ENCODE measurements at regions of chr4 and their contacts with region 1.

Region 1: DNA sequence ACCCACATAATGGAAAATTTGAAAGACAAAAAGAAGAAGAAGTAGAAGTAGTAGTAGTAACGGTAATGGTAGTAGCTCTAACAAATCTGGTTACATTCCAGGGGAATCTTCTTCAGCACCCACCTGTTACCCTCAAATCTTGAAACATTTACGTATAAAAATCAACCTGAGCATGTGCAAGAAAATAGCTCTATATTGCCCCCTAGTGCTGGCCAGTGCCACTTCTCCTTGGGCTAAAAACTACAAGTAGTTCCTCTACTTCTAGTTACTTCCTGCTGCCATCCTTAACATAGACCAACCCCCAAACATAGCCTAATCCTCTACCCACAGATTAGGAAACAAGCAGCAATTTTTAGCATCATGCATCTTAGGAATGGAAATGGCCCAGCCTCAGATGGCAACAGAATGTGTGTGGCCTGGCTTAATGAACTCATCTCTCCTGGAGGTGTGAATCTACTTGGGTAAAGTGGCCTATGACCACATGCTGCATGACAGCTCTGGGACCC is 3.1 kb downstream of the PDGFC start:
- DNase-seq: peak; percentile 33 to 61
- ATAC-seq: peak; percentile 28 to 66 (median 57)
- H3K4me3 ChIP-seq: peak overlapping the region; percentile 84
- H3K27ac ChIP-seq: peak overlapping the region; percentile 89
- H3K4me1 ChIP-seq: peaks cover 20% of the 10 kb centered on the region
- H3K27me3 ChIP-seq: no peaks in the 10 kb centered on the region
- CTCF ChIP-seq: peak; percentile 84

Region 2: GRCh38 chr4:156475322-156475721 is 493.2 kb before region 1 on chr4:
- intact Hi-C with region 1: loop called in 1 of 2 experiments (anchors 10 kb)
- DNase-seq: no peak
- ATAC-seq: peak; percentile 66 to 88 (median 74)
- H3K4me3 ChIP-seq: no peak overlapping the region
- H3K27ac ChIP-seq: no peak overlapping the region
- H3K4me1 ChIP-seq: no peaks in the 10 kb centered on the region
- H3K27me3 ChIP-seq: no peaks in the 10 kb centered on the region
- CTCF ChIP-seq: peak; percentile 62

Region 3: GRCh38 chr4:156594624-156595023 is 373.9 kb before region 1 on chr4:
- intact Hi-C with region 1: loop called in 1 of 2 experiments (anchors 5 kb)
- DNase-seq: peak; percentile 34 to 47
- ATAC-seq: no peak
- H3K4me3 ChIP-seq: no peak overlapping the region
- H3K27ac ChIP-seq: no peak overlapping the region
- H3K4me1 ChIP-seq: peaks cover 3% of the 10 kb centered on the region
- H3K27me3 ChIP-seq: no peaks in the 10 kb centered on the region
- CTCF ChIP-seq: no peak

Region 4: DNA sequence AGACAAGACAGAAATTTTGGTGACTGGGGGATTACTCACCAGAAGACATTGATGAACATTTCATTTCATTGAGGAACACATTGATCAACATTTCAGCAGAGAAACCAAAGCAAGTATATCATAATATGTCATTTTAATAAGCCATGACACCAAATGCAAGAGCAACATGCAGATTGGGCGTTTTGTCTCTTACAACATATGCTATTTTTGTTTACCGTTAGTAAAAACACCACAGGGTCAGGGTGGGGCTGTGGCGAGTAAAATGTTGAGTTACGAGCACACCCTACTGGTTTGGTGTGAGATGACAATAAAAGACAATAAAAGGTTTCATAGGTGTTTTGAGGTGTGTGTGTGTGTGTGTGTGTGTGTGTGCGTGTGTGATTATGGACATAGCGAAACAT is 291.4 kb before region 1 on chr4:
- intact Hi-C with region 1: loop called in 1 of 2 experiments (anchors 10 kb)
- DNase-seq: no peak
- ATAC-seq: peak; percentile 61 to 74 (median 68)
- H3K4me3 ChIP-seq: no peak overlapping the region
- H3K27ac ChIP-seq: no peak overlapping the region
- H3K4me1 ChIP-seq: peaks cover 8% of the 10 kb centered on the region
- H3K27me3 ChIP-seq: no peaks in the 10 kb centered on the region
- CTCF ChIP-seq: no peak

Region 5: GRCh38 chr4:156771171-156771837 is 197.2 kb before region 1 on chr4:
- intact Hi-C with region 1: loop called in 1 of 2 experiments (anchors 5 kb)
- DNase-seq: no peak
- ATAC-seq: peak; percentile 80 to 92 (median 88)
- H3K4me3 ChIP-seq: peak overlapping the region; percentile 50
- H3K27ac ChIP-seq: peak overlapping the region; percentile 81
- H3K4me1 ChIP-seq: peaks cover 64% of the 10 kb centered on the region
- H3K27me3 ChIP-seq: no peaks in the 10 kb centered on the region
- CTCF ChIP-seq: no peak

Region 6: DNA sequence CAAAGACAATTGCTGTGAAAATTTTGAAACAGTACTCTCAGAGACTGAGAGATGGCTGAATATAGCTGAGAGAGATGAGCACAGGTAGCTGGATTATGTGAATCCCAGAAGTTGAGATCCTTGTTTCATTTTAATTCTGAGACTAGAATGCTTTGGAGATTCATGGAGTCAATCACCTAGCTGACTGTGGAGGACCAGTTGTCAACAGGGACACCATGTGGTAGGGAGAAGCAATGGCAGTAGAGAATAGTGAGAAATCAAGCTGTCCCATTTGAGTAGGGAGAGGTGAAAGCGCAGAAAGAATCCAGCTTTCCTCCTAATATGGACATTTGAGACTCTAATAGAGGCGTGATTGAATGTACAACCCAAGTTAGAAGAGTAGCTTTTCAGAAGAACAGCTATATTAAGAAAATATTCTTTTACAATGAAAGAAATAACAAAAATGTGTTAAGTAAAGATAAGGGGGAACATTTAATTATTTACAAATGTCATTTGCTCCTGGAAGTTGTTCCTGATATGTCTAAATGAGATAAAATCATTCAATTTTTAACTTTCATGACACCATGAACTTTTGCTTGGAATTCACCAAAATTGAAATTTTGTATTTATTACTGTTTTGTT is 77.1 kb after region 1 on chr4:
- intact Hi-C with region 1: loop called in 1 of 2 experiments (anchors 2 kb)
- DNase-seq: no peak
- ATAC-seq: peak; percentile 80 to 90 (median 84)
- H3K4me3 ChIP-seq: no peak overlapping the region
- H3K27ac ChIP-seq: no peak overlapping the region
- H3K4me1 ChIP-seq: no peaks in the 10 kb centered on the region
- H3K27me3 ChIP-seq: no peaks in the 10 kb centered on the region
- CTCF ChIP-seq: peak; percentile 77

Region 7: GRCh38 chr4:157079441-157079840 is 110.9 kb after region 1 on chr4:
- intact Hi-C with region 1: no loop called
- DNase-seq: no peak
- ATAC-seq: no peak
- H3K4me3 ChIP-seq: no peak overlapping the region
- H3K27ac ChIP-seq: no peak overlapping the region
- H3K4me1 ChIP-seq: no peaks in the 10 kb centered on the region
- H3K27me3 ChIP-seq: no peaks in the 10 kb centered on the region
- CTCF ChIP-seq: no peak